ENCODE measurements at regions of chr4 and their contacts with region 1.

Region 1: DNA sequence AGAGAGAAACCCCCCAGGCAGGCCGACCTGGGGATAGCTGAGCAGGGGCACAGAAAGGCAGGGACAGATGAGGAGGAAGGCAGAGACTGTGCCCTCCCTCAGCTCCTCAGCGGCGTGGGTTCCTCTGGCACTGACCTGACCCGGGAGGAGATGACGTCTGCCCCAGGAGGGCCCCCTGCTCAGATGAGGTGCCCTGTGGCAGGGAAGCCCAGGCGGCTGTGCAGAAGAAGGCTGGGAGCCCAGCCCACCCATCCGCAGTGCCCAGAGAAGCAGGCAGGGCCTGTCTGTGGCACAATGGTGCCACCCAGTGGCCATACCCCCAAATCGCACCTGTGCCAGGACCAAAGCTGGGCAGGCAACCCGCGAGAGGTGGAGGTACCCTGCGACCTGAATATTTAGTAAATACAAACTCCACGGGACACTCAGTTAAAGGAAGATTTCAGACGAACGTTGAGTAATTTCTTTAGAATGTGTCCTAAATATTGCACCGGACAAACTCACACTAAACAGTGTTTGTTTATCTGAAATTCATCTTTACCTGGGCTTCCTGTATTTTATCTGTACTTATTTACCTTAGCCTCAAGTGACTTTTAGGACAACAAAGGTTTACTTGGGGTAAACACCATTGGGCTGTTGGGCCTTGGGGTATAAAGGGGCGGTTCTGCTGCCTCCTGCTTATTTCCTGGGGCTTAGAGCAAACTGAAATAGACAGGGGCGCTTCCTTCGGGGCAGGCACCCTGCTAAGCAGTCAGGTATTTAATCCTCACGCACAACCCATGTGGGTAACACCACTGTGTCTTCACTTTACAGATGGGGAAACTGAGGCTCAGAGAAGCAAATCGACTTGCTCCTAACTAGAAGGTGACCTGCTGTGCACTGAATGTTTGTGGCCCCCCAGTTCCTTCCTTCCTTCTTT is 46.5 kb upstream of the HMX1 start:
- DNase-seq: peak; percentile 68 to 75 (median 69)
- ATAC-seq: peak; percentile 86 to 96 (median 92)
- H3K4me3 ChIP-seq: no peak overlapping the region
- H3K27ac ChIP-seq: no peak overlapping the region
- H3K4me1 ChIP-seq: no peaks in the 10 kb centered on the region
- H3K27me3 ChIP-seq: no peaks in the 10 kb centered on the region
- CTCF ChIP-seq: peak; percentile 62 to 93 (median 88)
- POLR2A ChIP-seq: no peak

Region 2: GRCh38 chr4:8607603-8608481 is 310.3 kb before region 1 on chr4:
- intact Hi-C with region 1: loop called (anchors 10 kb)
- DNase-seq: no peak
- ATAC-seq: peak; percentile 25 to 58 (median 54)
- H3K4me3 ChIP-seq: no peak overlapping the region
- H3K27ac ChIP-seq: no peak overlapping the region
- H3K4me1 ChIP-seq: no peaks in the 10 kb centered on the region
- H3K27me3 ChIP-seq: no peaks in the 10 kb centered on the region
- CTCF ChIP-seq: peak; percentile 61 to 96 (median 92)
- POLR2A ChIP-seq: no peak

Measured in right lobe of liver (tissue), 6 donors.